ENCODE measurements at regions of chr9 and their contacts with region 1.

Region 1: DNA sequence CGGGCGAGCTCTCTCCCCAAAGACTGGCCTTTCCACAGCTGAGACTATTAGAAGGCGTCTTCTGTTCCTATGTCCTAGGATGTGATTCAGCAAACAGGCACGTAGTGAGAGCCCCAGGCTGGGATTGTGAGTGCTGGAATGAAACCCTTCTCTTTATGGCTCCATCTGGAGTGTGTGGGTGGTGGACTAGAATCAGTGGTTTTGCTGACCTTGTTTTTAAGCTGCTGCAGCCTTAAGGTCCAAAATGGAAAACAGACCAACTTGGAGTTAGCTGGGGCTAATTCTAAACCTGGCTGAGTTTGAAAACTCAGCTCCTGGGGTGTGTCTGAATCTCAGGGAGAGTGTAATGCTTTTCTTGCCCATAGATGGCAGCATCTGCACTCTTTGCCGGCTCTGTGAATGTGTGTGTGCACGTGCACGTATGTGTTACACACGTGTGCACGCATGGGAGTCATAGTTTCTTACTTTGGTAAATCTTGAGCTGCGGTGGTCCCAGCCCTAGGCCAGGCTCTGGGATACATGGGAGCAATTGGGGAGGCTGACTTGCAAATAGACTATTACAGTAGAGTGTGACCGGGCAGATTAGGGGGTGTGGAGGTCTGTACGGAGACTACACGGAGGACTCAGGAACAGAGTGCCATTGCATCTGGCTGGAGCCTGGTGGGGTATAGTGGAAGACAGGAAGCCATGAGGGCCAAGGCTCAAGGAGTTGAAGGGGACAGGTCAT is 10.7 kb downstream of the GSN start:
- DNase-seq: peak; percentile 83 to 93
- H3K4me3 ChIP-seq: no peak overlapping the region; the same call in 1 of the 2 replicates
- H3K27ac ChIP-seq: peak overlapping the region; percentile 70
- H3K4me1 ChIP-seq: peaks cover 64% of the 10 kb centered on the region
- H3K27me3 ChIP-seq: no peaks in the 10 kb centered on the region
- CTCF ChIP-seq: peak; percentile 71

Region 2: DNA sequence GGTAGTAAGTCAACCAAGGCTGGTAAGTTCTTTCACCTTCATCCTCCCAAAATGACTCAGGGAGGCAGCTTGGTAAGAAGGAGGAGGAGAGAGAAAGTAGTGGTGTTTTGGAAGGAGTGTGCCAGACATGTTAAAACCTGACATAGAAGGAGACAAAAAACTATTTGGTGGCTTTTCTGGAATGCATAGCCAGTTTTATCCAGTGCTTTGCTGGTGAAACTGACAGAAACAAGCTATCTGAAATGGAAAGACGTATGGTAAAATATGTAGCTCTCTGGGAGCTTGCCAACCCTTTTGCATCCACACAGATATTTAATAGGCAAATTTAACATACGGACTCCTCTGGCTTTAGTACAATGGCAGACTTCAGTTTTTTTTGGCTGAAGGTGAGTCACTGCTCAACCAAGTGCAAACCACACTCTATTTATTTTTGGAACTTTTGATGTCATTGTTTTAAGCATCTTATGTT is 122.4 kb before region 1 on chr9:
- CTCF ChIA-PET with region 1: no interaction called
- POLR2A ChIA-PET with region 1: no interaction called
- intact Hi-C with region 1: no loop called
- DNase-seq: peak in 1 of 2 experiments; percentile 28
- H3K4me3 ChIP-seq: no peak overlapping the region
- H3K27ac ChIP-seq: no peak overlapping the region
- H3K4me1 ChIP-seq: peaks cover 30% of the 10 kb centered on the region
- H3K27me3 ChIP-seq: no peaks in the 10 kb centered on the region
- CTCF ChIP-seq: no peak

Region 3: DNA sequence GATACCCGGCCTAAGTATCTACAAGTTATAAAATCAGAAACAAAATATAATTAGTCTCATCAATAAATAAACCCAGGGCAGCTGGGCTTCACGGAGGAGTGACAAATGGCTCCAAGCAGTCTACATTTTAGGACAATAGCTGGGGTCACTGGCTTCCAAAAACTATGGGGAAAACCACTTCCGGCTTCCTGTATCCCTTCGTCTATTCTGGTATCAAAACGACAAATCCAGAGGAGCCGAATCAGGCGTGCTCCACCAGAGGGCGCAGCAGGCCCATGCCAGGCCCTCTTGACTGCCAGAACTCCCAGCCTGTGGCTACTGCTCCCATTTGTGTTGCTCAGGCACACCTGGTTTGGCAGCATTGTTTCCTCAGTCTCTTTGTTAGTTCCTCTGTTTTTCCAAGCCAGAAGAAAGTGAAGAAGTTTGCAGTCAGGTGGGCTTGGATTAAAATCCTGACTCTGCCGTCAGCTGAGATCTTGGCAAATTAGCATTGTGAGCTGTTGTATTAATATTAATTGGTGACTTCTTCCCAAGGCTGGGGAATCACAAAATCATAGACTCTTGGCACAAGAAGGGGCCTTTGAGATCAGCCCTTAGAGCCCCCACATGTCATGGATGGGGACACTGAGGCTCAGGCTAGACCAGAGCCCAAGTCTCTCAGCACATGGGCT is 65.4 kb before region 1 on chr9:
- CTCF ChIA-PET with region 1: interaction called, 9 read pairs
- POLR2A ChIA-PET with region 1: interaction called, 10 read pairs
- intact Hi-C with region 1: loop called (anchors 1 kb)
- DNase-seq: peak; percentile 78 to 94
- H3K4me3 ChIP-seq: no peak overlapping the region
- H3K27ac ChIP-seq: no peak overlapping the region
- H3K4me1 ChIP-seq: peaks cover 5% of the 10 kb centered on the region; the same call in 1 of the 2 replicates
- H3K27me3 ChIP-seq: no peaks in the 10 kb centered on the region
- CTCF ChIP-seq: peak; percentile 95

Region 4: GRCh38 chr9:121226186-121226585 is 52.5 kb before region 1 on chr9:
- CTCF ChIA-PET with region 1: interaction called, 12 read pairs
- POLR2A ChIA-PET with region 1: interaction called, 19 read pairs
- intact Hi-C with region 1: no loop called
- DNase-seq: peak; percentile 42 to 73
- H3K4me3 ChIP-seq: no peak overlapping the region
- H3K27ac ChIP-seq: peak overlapping the region; percentile 17
- H3K4me1 ChIP-seq: peaks cover 20% of the 10 kb centered on the region
- H3K27me3 ChIP-seq: no peaks in the 10 kb centered on the region
- CTCF ChIP-seq: no peak

Region 5: GRCh38 chr9:121233906-121234901 is 44.5 kb before region 1 on chr9:
- CTCF ChIA-PET with region 1: interaction called, 4 read pairs
- POLR2A ChIA-PET with region 1: interaction called, 4 read pairs
- intact Hi-C with region 1: loop called (anchors 1 kb)
- DNase-seq: peak; percentile 78 to 97
- H3K4me3 ChIP-seq: no peak overlapping the region
- H3K27ac ChIP-seq: peak overlapping the region; percentile 94
- H3K4me1 ChIP-seq: peaks cover 32% of the 10 kb centered on the region
- H3K27me3 ChIP-seq: no peaks in the 10 kb centered on the region
- CTCF ChIP-seq: no peak

Region 6: GRCh38 chr9:121267689-121268597 is 10.8 kb before region 1 on chr9 and contains the start of gene GSN:
- CTCF ChIA-PET with region 1: interaction called, 28 read pairs
- POLR2A ChIA-PET with region 1: interaction called, 4 read pairs
- intact Hi-C with region 1: no loop called
- DNase-seq: peak; percentile 34 to 74
- H3K4me3 ChIP-seq: peak within 1 kb of the TSS; percentile 93
- H3K27ac ChIP-seq: no peak within 1 kb of the TSS
- H3K4me1 ChIP-seq: peaks cover 23% of the 10 kb centered on the region
- H3K27me3 ChIP-seq: no peaks in the 10 kb centered on the region
- CTCF ChIP-seq: no peak
- total RNA-seq, gene GSN: 135 and 207 TPM in 2 replicates

Region 7: GRCh38 chr9:121369595-121370265 is 91.0 kb after region 1 on chr9 and contains the start of gene STOM:
- CTCF ChIA-PET with region 1: no interaction called
- POLR2A ChIA-PET with region 1: no interaction called
- intact Hi-C with region 1: loop called (anchors 5 kb)
- DNase-seq: no peak
- H3K4me3 ChIP-seq: peak within 1 kb of the TSS; percentile 72
- H3K27ac ChIP-seq: no peak within 1 kb of the TSS
- H3K4me1 ChIP-seq: peaks cover 30% of the 10 kb centered on the region
- H3K27me3 ChIP-seq: no peaks in the 10 kb centered on the region
- CTCF ChIP-seq: no peak
- total RNA-seq, gene STOM: 7.1 and 7.6 TPM in 2 replicates

Region 8: DNA sequence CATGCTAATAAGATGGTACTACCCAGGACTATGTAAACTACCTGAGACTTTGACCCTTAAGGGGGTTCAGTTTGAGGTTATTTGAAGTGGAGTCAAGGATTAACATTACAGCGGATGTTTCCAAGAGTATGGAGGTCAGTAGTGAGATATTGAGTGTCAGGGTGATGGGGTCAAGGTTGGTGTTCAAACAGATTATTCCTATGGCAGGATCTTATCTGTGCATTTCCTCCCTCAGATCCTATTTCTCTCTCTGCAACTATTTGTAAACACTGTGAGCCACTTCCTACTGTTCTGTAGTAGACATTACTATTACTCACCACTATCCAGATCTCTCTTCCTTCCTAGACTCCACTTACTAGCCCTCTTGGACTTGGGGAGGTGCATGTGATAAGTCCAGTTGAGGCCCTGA is 145.3 kb after region 1 on chr9:
- CTCF ChIA-PET with region 1: no interaction called
- POLR2A ChIA-PET with region 1: no interaction called
- intact Hi-C with region 1: no loop called
- DNase-seq: no peak
- H3K4me3 ChIP-seq: no peak overlapping the region
- H3K27ac ChIP-seq: no peak overlapping the region
- H3K4me1 ChIP-seq: no peaks in the 10 kb centered on the region
- H3K27me3 ChIP-seq: peaks cover 49% of the 10 kb centered on the region
- CTCF ChIP-seq: no peak

Region 9: GRCh38 chr9:121463026-121463807 is 184.5 kb after region 1 on chr9:
- CTCF ChIA-PET with region 1: no interaction called
- POLR2A ChIA-PET with region 1: no interaction called
- intact Hi-C with region 1: no loop called
- DNase-seq: peak in 1 of 2 experiments; percentile 31
- H3K4me3 ChIP-seq: no peak overlapping the region
- H3K27ac ChIP-seq: no peak overlapping the region
- H3K4me1 ChIP-seq: no peaks in the 10 kb centered on the region
- H3K27me3 ChIP-seq: peaks cover 68% of the 10 kb centered on the region
- CTCF ChIP-seq: peak; percentile 69

Region 10: GRCh38 chr9:122036988-122037387 is 758.3 kb after region 1 on chr9:
- CTCF ChIA-PET with region 1: no interaction called
- POLR2A ChIA-PET with region 1: no interaction called
- intact Hi-C with region 1: no loop called
- DNase-seq: no peak
- H3K4me3 ChIP-seq: no peak overlapping the region
- H3K27ac ChIP-seq: no peak overlapping the region
- H3K4me1 ChIP-seq: no peaks in the 10 kb centered on the region
- H3K27me3 ChIP-seq: no peaks in the 10 kb centered on the region
- CTCF ChIP-seq: no peak